Activated CD8-positive, alpha-beta memory T cell treated with anti-CD3 and anti-CD28 coated beads, Interleukin-2, amount 10 ng/mL, durations not matched to agents 7 days and 5 days (primary cell): ENCODE measurements at regions of chr1 and their contacts with region 1.

Region 1: DNA sequence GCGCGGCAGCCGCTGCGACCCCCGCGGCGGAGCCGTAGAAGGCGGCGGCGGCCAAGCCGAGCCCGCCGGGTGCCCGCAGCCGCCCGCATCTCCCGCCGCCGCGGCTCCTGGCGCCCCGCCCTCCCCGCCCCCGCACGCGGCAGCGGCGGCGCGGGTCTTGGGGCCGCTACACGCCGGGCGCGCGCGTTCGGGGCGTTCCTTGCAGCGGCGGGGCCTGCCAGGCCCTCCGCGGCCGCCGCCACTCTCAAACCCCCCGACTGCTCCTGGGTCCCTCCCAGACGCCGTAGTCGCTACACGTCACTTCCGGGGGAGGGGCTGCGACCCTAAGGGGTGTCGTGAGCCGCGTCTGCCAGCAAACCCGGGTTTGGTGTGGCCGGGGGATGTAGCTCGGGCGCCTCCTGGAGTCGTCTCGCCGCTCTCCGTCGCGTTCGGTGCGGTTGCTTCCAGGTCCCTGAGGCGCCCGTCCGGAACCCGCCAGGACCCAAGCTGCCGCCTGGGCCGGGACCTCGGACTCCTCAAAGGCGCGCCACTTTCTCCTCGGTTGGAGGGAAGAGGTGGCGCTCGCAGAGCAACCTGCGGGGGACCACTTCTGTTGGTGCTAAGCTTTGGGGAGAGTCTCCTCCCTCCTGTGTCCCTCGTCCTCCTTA is at the start of gene ELK4:
- DNase-seq: peak; percentile 99
- ATAC-seq: peak; percentile 86
- H3K4me3 Mint-ChIP-seq: peak within 1 kb of the TSS; percentile 91
- H3K27ac Mint-ChIP-seq: peak within 1 kb of the TSS; percentile 100
- H3K4me1 Mint-ChIP-seq: peaks cover 42% of the 10 kb centered on the region
- H3K27me3 Mint-ChIP-seq: peaks cover 6% of the 10 kb centered on the region
- total RNA-seq, gene ELK4: 70.9 to 79.7 TPM

Region 2: GRCh38 chr1:205528887-205529825 is 102.7 kb before region 1 on chr1:
- CTCF ChIA-PET with region 1: interaction called, 29 read pairs
- DNase-seq: peak; percentile 82
- ATAC-seq: peak; percentile 85
- H3K4me3 Mint-ChIP-seq: no peak overlapping the region
- H3K27ac Mint-ChIP-seq: no peak overlapping the region
- H3K4me1 Mint-ChIP-seq: peaks cover 3% of the 10 kb centered on the region
- H3K27me3 Mint-ChIP-seq: peaks cover 7% of the 10 kb centered on the region

Region 3: GRCh38 chr1:205547936-205548827 is 83.7 kb before region 1 on chr1:
- CTCF ChIA-PET with region 1: no interaction called
- DNase-seq: peak; percentile 28
- ATAC-seq: no peak
- H3K4me3 Mint-ChIP-seq: no peak overlapping the region
- H3K27ac Mint-ChIP-seq: no peak overlapping the region
- H3K4me1 Mint-ChIP-seq: peaks cover 7% of the 10 kb centered on the region
- H3K27me3 Mint-ChIP-seq: peaks cover 71% of the 10 kb centered on the region

Region 4: GRCh38 chr1:205600085-205600484 is 31.8 kb before region 1 on chr1:
- CTCF ChIA-PET with region 1: interaction called, 199 read pairs
- DNase-seq: peak; percentile 49
- ATAC-seq: peak; percentile 92
- H3K4me3 Mint-ChIP-seq: no peak overlapping the region
- H3K27ac Mint-ChIP-seq: peak overlapping the region; percentile 47
- H3K4me1 Mint-ChIP-seq: peaks cover 19% of the 10 kb centered on the region
- H3K27me3 Mint-ChIP-seq: no peaks in the 10 kb centered on the region

Region 5: DNA sequence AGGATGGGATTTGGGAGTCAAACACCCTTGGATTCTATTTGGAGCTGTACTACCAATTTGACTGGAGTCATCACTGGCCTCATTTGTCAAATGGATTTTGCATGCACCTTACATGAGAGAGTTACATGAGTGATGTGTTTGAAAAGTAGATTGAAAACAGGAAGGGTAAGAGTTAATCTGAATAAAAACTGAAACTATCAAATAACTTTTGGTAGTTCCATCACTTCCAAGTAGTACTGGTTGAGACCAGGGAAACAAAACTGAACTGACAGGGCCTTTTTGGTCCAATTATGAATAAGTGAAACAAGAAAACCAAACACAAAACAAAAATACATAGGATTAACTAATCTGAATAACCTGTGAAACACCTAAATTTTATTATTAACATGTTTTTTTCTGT is 87.9 kb after region 1 on chr1:
- CTCF ChIA-PET with region 1: no interaction called
- DNase-seq: no peak
- ATAC-seq: peak; percentile 42
- H3K4me3 Mint-ChIP-seq: no peak overlapping the region
- H3K27ac Mint-ChIP-seq: peak overlapping the region; percentile 58
- H3K4me1 Mint-ChIP-seq: peaks cover 24% of the 10 kb centered on the region
- H3K27me3 Mint-ChIP-seq: no peaks in the 10 kb centered on the region

Region 6: DNA sequence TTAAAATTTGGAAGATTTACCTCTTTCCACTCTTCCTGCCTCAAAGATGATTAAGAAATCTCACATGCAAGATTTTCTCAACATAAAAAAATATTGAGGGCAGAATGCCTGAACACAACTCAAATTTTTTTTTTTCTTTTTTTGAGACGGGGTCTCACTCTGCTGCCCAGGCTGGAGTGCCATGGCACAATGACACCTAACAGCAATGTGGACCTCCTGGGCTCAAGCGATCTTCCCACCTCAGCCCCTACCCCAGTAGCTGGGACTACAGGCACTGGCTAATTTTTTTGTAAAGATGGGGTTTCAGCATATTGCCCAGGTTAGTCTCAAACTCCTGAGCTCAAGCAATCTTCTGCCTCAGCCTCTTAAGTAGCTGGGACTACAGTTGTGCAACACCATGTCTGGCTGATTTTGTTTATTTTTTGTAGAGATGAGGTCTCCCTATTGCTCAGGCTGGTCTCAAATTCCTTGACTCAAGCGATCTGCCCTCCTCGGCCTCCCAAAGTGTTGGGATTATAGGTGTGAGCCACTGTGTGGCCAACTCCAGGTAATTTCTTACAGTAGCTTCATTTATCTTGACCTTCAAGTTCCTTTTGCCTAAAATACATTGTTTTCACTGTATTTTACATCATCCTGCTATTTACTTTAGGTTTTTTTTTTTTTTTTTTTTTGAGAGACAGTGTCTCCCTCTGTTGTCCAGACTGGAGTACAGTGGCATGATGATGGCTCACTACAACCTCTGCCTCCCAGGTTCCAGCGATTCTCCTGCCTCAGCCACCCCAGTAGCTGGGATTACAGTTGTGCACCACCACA is 107.7 kb after region 1 on chr1:
- CTCF ChIA-PET with region 1: no interaction called
- DNase-seq: no peak
- ATAC-seq: no peak
- H3K4me3 Mint-ChIP-seq: no peak overlapping the region
- H3K27ac Mint-ChIP-seq: no peak overlapping the region
- H3K4me1 Mint-ChIP-seq: peaks cover 42% of the 10 kb centered on the region
- H3K27me3 Mint-ChIP-seq: no peaks in the 10 kb centered on the region